Panc1 (cell line): ENCODE measurements at regions of chr7 and their contacts with region 1.

Region 1: DNA sequence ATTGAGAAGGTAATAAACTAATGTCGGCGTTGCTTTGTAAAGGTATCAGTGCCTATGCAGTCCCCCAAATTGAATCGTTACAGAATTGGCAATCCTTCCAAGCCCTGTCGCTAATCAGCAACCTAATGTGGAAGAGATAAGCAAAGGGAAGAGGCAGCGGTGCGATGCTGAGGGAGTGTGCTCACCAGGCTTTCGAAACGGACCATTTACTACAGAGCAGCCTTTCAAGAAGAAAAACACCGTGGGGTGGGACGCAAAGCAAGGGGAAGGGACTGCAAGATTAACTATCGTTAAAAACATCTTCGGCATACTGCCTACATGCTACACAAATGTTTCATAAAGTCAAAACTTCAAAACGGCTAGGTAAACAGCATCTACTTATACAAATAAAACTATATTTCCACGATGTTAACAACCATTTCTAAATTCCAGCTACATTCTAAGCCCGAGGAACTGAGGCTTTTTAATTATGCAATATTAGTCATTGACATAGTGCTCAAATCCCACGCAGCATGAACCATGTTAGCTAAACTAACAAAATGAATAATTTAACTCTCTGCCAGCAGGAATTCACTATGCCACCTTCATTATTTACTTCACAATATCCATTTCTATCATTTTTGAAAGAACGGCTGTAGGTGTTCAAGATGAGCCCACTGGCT is 85.2 kb downstream of the CHCHD3 start:
- DNase-seq: no peak
- ATAC-seq: no peak
- H3K4me3 ChIP-seq: no peak overlapping the region
- H3K27ac ChIP-seq: no peak overlapping the region
- H3K4me1 ChIP-seq: no peaks in the 10 kb centered on the region
- H3K27me3 ChIP-seq: no peaks in the 10 kb centered on the region
- CTCF ChIP-seq: no peak

Region 2: DNA sequence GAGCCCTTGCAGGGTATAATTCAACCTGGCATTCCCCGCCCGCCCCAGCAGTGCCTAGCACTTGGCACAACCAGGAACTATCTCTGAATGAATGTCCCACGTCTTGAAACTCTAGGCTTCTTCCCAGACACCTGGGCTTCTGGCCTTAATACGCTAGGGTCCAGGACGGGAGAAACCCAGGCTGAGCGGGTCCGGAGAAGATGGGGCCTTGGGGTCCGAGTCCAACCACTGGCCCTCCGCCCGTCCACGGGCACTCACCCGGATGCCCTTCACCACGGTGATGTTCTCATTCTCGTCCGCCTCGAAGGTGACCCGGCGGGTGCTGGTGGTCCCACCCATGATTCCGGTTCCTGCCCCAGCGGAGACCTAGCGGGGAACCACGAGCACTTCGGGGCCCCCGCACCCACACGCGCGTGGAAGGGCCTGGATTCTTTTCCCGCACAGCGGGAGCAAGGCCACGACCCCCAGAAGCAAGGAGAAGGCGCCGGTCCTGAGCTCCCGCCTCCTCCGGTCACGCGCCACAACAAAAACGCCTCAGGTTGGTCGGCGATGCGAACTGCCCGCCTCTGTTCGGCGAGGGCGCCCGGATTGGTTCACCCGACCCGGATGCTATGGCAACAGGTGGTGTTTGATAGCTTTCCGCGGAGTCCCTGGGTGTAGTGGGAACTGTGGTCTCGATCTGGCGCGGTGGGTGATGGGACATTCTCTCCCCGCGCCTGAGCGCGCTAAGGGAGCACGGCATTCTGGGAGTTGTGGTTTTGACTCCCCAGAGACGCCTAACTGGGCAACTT is 85.1 kb after region 1 on chr7 and contains the start of gene CHCHD3:
- CTCF ChIA-PET with region 1: interaction called, 11 read pairs
- POLR2A ChIA-PET with region 1: no interaction called
- in situ Hi-C with region 1: no loop called
- intact Hi-C with region 1: no loop called
- DNase-seq: peak; percentile 98
- ATAC-seq: peak; percentile 100
- H3K4me3 ChIP-seq: peak within 1 kb of the TSS; percentile 89 to 98
- H3K27ac ChIP-seq: peak within 1 kb of the TSS; percentile 95
- H3K4me1 ChIP-seq: peaks cover 13% of the 10 kb centered on the region
- H3K27me3 ChIP-seq: peaks cover 2% of the 10 kb centered on the region; the same call in 1 of the 2 replicates
- CTCF ChIP-seq: no peak
- total RNA-seq, gene CHCHD3: 109 TPM

Region 3: DNA sequence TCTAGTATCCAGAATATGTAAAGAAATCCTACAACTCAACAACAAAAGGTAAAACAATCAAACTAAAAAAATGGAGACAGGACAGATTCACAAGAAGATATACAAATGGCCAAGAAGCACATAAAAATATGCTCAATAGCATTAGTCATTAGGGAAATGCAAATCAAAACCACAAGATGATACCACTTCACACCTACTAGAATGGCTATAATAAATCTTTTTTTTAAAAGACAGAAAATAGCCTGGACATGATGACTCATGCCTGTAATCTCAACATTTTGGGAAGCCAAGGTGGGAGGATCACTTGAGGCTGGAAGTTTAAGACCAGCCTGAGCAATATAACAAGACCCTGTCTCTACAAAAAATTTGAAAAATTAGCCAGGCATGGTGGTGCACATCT is 113.1 kb after region 1 on chr7:
- CTCF ChIA-PET with region 1: no interaction called
- POLR2A ChIA-PET with region 1: no interaction called
- in situ Hi-C with region 1: no loop called
- intact Hi-C with region 1: no loop called
- DNase-seq: no peak
- ATAC-seq: no peak
- H3K4me3 ChIP-seq: no peak overlapping the region
- H3K27ac ChIP-seq: no peak overlapping the region
- H3K4me1 ChIP-seq: no peaks in the 10 kb centered on the region
- H3K27me3 ChIP-seq: peaks cover 9% of the 10 kb centered on the region; the same call in 1 of the 2 replicates
- CTCF ChIP-seq: no peak